ENCODE measurements at regions of chr1 and their contacts with region 1.

Region 1: GRCh38 chr1:9784508-9785133 is 39.1 kb downstream of the CLSTN1 start:
- DNase-seq: peak; percentile 55
- H3K4me3 Mint-ChIP-seq: no peak overlapping the region
- H3K27ac Mint-ChIP-seq: no peak overlapping the region
- H3K4me1 Mint-ChIP-seq: peaks cover 26% of the 10 kb centered on the region
- H3K27me3 Mint-ChIP-seq: no peaks in the 10 kb centered on the region

Region 2: GRCh38 chr1:9753121-9753531 is 31.5 kb before region 1 on chr1:
- intact Hi-C with region 1: no loop called
- DNase-seq: no peak
- H3K4me3 Mint-ChIP-seq: no peak overlapping the region
- H3K27ac Mint-ChIP-seq: no peak overlapping the region
- H3K4me1 Mint-ChIP-seq: no peaks in the 10 kb centered on the region
- H3K27me3 Mint-ChIP-seq: no peaks in the 10 kb centered on the region

Region 3: DNA sequence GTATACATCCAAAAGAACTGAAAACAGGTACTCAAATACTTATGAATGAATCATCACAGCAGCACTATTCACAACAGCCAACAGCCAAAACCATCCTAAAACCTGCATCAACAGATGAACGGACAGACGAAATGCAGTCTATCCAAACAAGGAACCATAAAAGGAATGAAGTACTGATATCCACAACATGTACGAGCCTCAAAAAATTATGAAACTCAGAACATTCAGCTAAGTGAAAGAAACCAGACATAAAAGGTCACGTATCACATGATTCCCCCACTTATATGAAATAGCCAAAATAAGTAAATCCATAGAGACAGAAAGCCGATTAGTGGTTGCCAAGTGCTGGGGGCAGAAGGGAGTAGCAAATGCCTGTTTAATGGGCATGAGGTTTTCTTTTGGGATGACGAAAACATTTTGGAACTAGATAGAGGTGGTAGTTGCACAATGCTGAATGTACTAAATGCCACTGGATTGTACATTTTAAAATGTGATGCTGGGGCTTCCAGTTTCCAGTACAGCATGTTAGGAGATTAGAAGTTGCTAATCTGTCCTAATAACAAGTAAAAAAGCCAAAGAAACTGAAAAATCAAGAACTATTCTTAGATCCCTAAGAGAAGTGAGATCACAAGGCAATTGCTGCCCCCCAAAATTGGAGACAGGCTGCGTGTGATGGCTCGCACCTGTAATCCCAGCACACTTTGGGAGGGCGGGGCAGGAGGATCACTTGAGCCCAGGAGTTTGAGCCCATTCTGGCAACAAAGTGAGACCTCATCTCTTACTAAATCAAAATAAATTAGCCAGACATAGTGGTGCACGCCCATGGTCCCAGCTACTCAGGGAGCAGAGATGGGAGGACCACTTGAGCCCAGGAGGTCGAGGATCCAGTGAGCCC is 13.9 kb after region 1 on chr1:
- intact Hi-C with region 1: loop called (anchors 1 kb)
- DNase-seq: no peak
- H3K4me3 Mint-ChIP-seq: no peak overlapping the region
- H3K27ac Mint-ChIP-seq: peak overlapping the region; percentile 27
- H3K4me1 Mint-ChIP-seq: peaks cover 40% of the 10 kb centered on the region
- H3K27me3 Mint-ChIP-seq: peaks cover 8% of the 10 kb centered on the region

Region 4: DNA sequence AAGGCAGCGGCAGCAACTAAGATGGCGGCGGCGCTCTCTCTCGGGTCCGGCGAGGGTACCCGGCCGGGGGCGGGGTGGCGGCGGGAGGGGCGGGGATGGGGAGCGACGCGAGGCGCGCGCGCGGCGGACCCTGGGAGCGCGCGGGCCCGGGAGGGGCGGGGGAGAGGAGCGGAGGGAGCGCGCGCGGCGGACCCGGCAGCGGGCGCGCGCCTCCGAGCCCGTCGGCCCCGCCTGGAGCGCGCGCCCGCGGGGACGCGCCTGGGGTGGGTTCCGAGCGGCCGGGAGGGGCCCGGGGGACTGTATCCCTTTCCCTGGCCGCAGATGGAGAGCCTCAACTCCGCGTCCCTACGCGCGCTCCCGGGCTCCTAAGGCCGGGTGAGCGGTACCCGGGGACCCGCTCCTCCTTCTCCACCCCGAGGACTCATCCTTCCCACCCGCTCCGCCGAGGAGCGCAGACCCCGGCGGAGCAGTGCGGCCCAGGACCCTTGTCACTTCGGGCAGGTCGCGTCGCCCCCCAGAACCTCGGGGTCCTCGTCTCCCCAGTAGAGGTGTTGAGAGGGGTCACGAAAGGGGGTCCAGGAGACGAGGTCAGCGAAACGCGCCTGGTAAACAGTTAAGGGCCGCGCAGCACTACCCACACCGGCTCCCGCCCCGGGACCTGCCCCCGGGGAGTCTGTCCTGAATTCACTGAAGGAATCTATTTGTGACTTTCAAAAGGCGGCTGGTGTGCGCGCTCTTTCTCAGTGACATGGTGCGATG is 39.5 kb after region 1 on chr1 and contains the start of gene CLSTN1:
- intact Hi-C with region 1: loop called (anchors 5 kb)
- DNase-seq: peak; percentile 84
- H3K4me3 Mint-ChIP-seq: peak within 1 kb of the TSS; percentile 90
- H3K27ac Mint-ChIP-seq: peak within 1 kb of the TSS; percentile 73
- H3K4me1 Mint-ChIP-seq: peaks cover 31% of the 10 kb centered on the region
- H3K27me3 Mint-ChIP-seq: peaks cover 15% of the 10 kb centered on the region
- total RNA-seq, gene CLSTN1: 46.5 and 48.8 TPM in 2 replicates

Region 5: DNA sequence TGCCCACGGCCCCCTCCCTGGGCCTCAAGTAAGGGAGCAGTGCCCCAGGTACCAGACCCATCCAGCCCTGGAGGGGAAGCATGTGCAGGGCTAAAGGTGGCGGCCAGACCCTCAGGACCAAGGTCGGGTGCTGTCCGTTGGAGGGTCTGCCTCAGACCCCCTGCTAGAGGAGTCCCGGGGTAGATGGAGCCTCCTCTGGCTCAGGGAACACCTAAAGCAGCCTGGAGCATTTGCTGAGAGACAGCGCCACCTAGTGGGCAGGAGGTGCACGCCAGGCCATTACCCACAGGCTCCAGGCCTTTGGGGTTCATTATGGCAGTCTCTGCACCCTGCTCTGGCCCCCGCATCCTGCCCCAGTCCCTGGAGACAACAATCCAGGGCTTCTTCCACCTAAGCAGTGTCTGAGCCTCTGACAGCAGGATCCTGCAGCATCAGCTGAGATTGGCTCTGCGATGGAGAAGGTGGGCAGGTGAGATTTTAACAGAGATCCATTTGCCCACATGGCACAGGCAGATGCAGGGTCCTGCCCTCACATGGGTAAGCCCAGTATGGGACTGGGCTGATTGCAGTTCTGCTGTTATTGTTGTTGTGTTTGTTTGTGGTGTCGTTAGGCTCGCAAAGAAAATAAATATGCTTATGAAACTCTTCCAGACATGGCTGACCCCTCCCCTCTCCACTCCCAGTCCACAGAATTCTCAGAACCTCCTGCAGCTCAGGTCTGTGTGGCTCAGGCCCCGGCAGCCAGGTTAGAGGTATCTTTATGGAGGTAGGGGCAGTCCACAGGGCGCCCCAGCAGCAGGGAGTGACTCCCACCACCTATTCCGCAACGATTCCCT is 83.0 kb after region 1 on chr1:
- intact Hi-C with region 1: loop called (anchors 1 kb)
- DNase-seq: peak; percentile 77
- H3K4me3 Mint-ChIP-seq: no peak overlapping the region
- H3K27ac Mint-ChIP-seq: no peak overlapping the region
- H3K4me1 Mint-ChIP-seq: peaks cover 4% of the 10 kb centered on the region
- H3K27me3 Mint-ChIP-seq: no peaks in the 10 kb centered on the region

Region 6: GRCh38 chr1:9881838-9882249 is 97.2 kb after region 1 on chr1:
- intact Hi-C with region 1: no loop called
- DNase-seq: no peak
- H3K4me3 Mint-ChIP-seq: no peak overlapping the region
- H3K27ac Mint-ChIP-seq: peak overlapping the region; percentile 50
- H3K4me1 Mint-ChIP-seq: peaks cover 13% of the 10 kb centered on the region
- H3K27me3 Mint-ChIP-seq: no peaks in the 10 kb centered on the region

Measured in activated T-helper 2 cell treated with anti-CD3 and anti-CD28 coated beads, Interferon-gamma antibody, Interleukin-2, Interleukin-4, amounts not matched to agents 10 μg/mL and 5 μg/mL and 100 μg/mL, durations not matched to agents 14 hours and 24 hours and 36 hours (primary cell).